Natural killer cell (primary cell): ENCODE measurements at regions of chr17 and their contacts with region 1.

Region 1: GRCh38 chr17:82351716-82352488 is 7.1 kb upstream of the TEX19 start:
- DNase-seq: peak; percentile 76 to 94
- ATAC-seq: peak; percentile 63 to 83 (median 64)
- H3K4me3 ChIP-seq: no peak overlapping the region
- H3K4me3 Mint-ChIP-seq: no peak overlapping the region
- H3K27ac ChIP-seq: no peak overlapping the region
- H3K27ac Mint-ChIP-seq: no peak overlapping the region
- H3K4me1 ChIP-seq: peaks cover 28% of the 10 kb centered on the region
- H3K4me1 Mint-ChIP-seq: peaks cover 0 to 20% of the 10 kb centered on the region in 2 donors
- H3K27me3 ChIP-seq: no peaks in the 10 kb centered on the region
- H3K27me3 Mint-ChIP-seq: peaks cover 0 to 6% of the 10 kb centered on the region in 2 donors
- CTCF ChIP-seq: peak; percentile 97

Region 2: GRCh38 chr17:82367724-82368524 is 16.0 kb after region 1 on chr17:
- intact Hi-C with region 1: no loop called
- DNase-seq: no peak
- ATAC-seq: no peak
- H3K4me3 ChIP-seq: no peak overlapping the region
- H3K4me3 Mint-ChIP-seq: no peak overlapping the region
- H3K27ac ChIP-seq: no peak overlapping the region
- H3K27ac Mint-ChIP-seq: no peak overlapping the region
- H3K4me1 ChIP-seq: peaks cover 10% of the 10 kb centered on the region
- H3K4me1 Mint-ChIP-seq: peaks cover 7 to 9% of the 10 kb centered on the region in 2 donors
- H3K27me3 ChIP-seq: peaks cover 18% of the 10 kb centered on the region
- H3K27me3 Mint-ChIP-seq: peaks cover 14 to 37% of the 10 kb centered on the region in 2 donors
- CTCF ChIP-seq: no peak

Region 3: GRCh38 chr17:82377924-82378623 is 26.2 kb after region 1 on chr17:
- intact Hi-C with region 1: no loop called
- DNase-seq: no peak
- ATAC-seq: no peak
- H3K4me3 ChIP-seq: no peak overlapping the region
- H3K4me3 Mint-ChIP-seq: no peak overlapping the region
- H3K27ac ChIP-seq: no peak overlapping the region
- H3K27ac Mint-ChIP-seq: no peak overlapping the region
- H3K4me1 ChIP-seq: no peaks in the 10 kb centered on the region
- H3K4me1 Mint-ChIP-seq: peaks cover 8 to 13% of the 10 kb centered on the region in 2 donors
- H3K27me3 ChIP-seq: peaks cover 9% of the 10 kb centered on the region
- H3K27me3 Mint-ChIP-seq: peaks cover 15 to 25% of the 10 kb centered on the region in 2 donors
- CTCF ChIP-seq: no peak

Region 4: GRCh38 chr17:82400830-82401229 is 48.9 kb after region 1 on chr17:
- intact Hi-C with region 1: no loop called
- DNase-seq: peak; percentile 51 to 75
- ATAC-seq: peak; percentile 82 to 94 (median 93)
- H3K4me3 ChIP-seq: peak overlapping the region; percentile 17
- H3K4me3 Mint-ChIP-seq: peak overlapping the region; percentile 94
- H3K27ac ChIP-seq: no peak overlapping the region
- H3K27ac Mint-ChIP-seq: peak overlapping the region; percentile 78 to 80
- H3K4me1 ChIP-seq: peaks cover 23% of the 10 kb centered on the region
- H3K4me1 Mint-ChIP-seq: peaks cover 13 to 16% of the 10 kb centered on the region in 2 donors
- H3K27me3 ChIP-seq: no peaks in the 10 kb centered on the region
- H3K27me3 Mint-ChIP-seq: no peaks in the 10 kb centered on the region
- CTCF ChIP-seq: no peak

Region 5: GRCh38 chr17:82494236-82495055 is 142.5 kb after region 1 on chr17:
- intact Hi-C with region 1: loop called (anchors 1 kb)
- DNase-seq: peak; percentile 92 to 93
- ATAC-seq: peak; percentile 72 to 87 (median 85)
- H3K4me3 ChIP-seq: no peak overlapping the region
- H3K4me3 Mint-ChIP-seq: peak overlapping the region; percentile 74
- H3K27ac ChIP-seq: peak overlapping the region; percentile 50
- H3K27ac Mint-ChIP-seq: peak overlapping the region; percentile 87 to 93
- H3K4me1 ChIP-seq: peaks cover 41% of the 10 kb centered on the region
- H3K4me1 Mint-ChIP-seq: peaks cover 21 to 46% of the 10 kb centered on the region in 2 donors
- H3K27me3 ChIP-seq: no peaks in the 10 kb centered on the region
- H3K27me3 Mint-ChIP-seq: no peaks in the 10 kb centered on the region
- CTCF ChIP-seq: peak; percentile 89

Region 6: DNA sequence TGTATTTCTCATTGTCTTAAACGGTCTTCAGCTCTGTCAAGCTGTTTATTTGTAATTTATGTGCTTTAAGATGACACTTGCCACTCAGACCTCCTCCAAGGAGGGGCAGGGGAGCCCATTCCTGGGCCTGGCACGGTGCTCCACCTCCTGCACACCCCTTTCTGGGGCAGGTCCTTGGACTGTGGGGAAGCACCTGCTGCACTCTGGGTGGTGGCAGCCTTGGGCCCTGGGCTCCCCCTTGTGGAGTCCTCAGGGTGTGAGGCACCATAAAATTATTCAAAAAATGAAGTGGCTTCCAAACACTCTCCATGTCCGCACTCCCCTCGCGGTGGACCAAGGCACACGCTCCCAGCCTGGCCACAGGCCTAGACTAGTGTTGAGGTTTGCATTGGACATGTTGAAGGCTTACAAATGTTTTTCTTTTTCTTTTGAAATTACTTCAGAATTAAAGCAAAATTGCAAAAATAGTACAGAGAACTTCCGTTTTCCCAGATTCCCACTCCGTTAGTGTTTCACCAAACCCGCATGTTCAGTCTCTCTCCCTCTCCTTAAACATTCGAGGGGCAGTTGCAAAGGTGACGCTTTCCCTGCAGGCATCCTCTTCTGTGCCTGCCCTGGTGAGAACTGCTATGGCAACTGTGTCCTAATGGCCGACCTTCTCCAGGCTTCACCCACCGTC is 200.0 kb after region 1 on chr17:
- intact Hi-C with region 1: loop called (anchors 1 kb)
- DNase-seq: peak; percentile 59 to 86
- ATAC-seq: peak; percentile 88 to 94 (median 88)
- H3K4me3 ChIP-seq: no peak overlapping the region
- H3K4me3 Mint-ChIP-seq: peak overlapping the region; percentile 9
- H3K27ac ChIP-seq: no peak overlapping the region
- H3K27ac Mint-ChIP-seq: peak overlapping the region; percentile 68 to 75
- H3K4me1 ChIP-seq: peaks cover 29% of the 10 kb centered on the region
- H3K4me1 Mint-ChIP-seq: peaks cover 39 to 50% of the 10 kb centered on the region in 2 donors
- H3K27me3 ChIP-seq: no peaks in the 10 kb centered on the region
- H3K27me3 Mint-ChIP-seq: no peaks in the 10 kb centered on the region
- CTCF ChIP-seq: peak; percentile 66